Tibial artery (tissue), 4 donors: ENCODE measurements at regions of chr4 and their contacts with region 1.

Region 1: DNA sequence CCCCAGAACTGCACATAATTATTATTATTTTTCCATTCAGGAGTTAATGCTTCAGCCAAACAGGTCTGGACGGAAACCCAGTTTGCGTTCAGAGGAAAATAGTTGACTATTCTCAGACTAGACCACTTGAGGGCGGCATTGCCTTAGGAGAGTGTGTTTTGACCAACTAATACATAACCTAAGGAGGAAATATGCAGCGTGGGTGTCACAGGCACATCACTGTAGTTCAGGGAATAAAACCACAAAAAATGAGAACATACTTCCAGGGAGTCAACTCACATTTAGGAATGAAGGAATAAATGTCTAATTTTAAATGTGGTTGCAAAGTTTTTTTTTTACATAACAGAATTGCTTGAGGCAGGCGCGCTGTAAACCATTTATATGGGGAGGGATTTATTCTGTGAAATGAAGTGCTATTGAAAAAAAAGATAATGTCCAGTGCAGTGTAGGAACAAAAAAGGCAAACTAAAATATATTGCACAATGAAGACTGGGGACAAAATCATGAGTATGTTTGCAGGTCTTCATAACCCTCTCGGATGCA is 93.3 kb downstream of the SYNPO2 start:
- DNase-seq: peak in 1 of 2 donors; percentile 67
- H3K4me3 ChIP-seq: no peak overlapping the region
- H3K27ac ChIP-seq: peak overlapping the region; percentile 86
- H3K4me1 ChIP-seq: peaks cover 0 to 96% (median 50%) of the 10 kb centered on the region in 4 donors
- H3K27me3 ChIP-seq: no peaks in the 10 kb centered on the region
- CTCF ChIP-seq: peak; percentile 80 to 81

Region 2: DNA sequence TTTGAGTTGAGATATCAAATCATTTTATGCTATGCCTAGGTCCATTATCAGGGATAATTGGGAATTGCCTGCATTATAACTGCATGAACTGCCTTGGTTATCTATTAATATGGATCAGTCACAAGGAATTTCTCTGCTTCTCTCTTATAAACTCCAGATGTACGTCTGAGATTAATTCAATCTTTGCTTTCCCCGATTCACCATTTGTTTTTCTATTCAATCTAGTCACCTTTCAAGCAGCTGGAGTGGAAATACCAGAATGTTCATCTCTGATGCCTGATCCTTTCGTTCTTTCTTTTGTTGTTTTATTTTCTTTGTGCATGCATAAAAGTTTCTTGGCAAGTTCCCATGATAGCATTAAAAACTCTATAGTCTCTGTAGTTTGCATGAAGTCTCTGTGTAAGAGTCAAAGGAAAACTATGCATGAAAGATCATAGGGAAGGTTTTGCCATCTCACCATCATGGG is 70.6 kb before region 1 on chr4:
- intact Hi-C with region 1: no loop called
- DNase-seq: no peak
- H3K4me3 ChIP-seq: no peak overlapping the region
- H3K27ac ChIP-seq: peak overlapping the region; percentile 63 to 90
- H3K4me1 ChIP-seq: peaks cover 0 to 90% (median 21%) of the 10 kb centered on the region in 4 donors
- H3K27me3 ChIP-seq: no peaks in the 10 kb centered on the region
- CTCF ChIP-seq: no peak

Region 3: DNA sequence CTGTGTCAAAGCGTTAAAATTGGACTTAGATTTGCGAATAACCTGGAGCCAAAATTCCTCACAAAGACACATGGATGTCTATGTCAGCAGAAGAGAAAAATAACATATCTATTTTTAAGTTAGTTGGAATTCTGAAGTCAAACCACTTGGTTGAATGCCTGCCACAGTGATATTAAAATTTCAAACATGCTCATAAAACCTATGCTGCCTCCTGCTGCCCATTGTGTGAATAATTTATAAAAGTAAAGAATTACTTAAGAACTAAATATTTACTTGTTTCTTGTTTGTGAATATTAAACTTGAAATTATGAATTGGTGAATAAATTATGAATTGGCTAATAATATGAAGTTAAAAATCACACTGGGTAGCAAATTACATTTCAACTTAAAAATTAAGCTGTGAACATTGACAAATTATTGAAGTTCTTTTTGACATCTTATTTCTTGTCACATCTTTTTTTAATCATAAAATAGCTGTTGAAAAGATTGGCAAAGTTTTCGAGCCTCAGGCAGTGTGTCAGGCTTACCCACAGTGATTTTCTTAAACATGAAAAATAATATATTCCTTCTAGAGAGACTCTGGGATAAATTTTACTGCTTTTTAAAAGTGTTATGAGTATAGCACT is 304.6 kb after region 1 on chr4:
- intact Hi-C with region 1: loop called (anchors 5 kb)
- DNase-seq: no peak
- H3K4me3 ChIP-seq: no peak overlapping the region
- H3K27ac ChIP-seq: peak overlapping the region in 1 of 2 donors; percentile 58
- H3K4me1 ChIP-seq: peaks cover 0 to 30% (median 17%) of the 10 kb centered on the region in 4 donors
- H3K27me3 ChIP-seq: no peaks in the 10 kb centered on the region
- CTCF ChIP-seq: peak; percentile 53 to 77

Region 4: GRCh38 chr4:119729835-119730670 is 748.1 kb after region 1 on chr4:
- intact Hi-C with region 1: loop called (anchors 10 kb)
- DNase-seq: peak; percentile 43 to 84
- H3K4me3 ChIP-seq: no peak overlapping the region
- H3K27ac ChIP-seq: peak overlapping the region; percentile 59 to 68
- H3K4me1 ChIP-seq: peaks cover 0 to 92% (median 64%) of the 10 kb centered on the region in 4 donors
- H3K27me3 ChIP-seq: no peaks in the 10 kb centered on the region
- CTCF ChIP-seq: peak in 1 of 2 experiments; percentile 12